ENCODE measurements at regions of chr15 and their contacts with region 1.

Region 1: DNA sequence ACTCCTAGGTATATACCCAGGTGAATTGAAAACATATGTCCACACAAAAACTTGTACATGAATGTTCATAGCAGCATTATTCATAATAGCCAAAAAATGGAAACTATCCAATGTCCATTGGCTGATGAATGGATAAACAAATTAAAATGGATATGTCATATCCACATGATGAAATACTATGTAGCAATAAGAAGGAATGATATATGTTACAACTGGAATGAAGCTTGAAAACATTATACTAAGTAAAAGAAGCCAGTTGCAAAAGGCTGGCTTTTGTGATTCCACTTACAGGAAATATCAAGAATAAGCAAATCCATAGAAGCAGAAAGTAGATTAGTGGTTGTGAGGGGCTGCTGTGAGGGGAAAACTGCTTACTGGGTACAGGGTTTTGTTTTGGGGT is 33.7 kb downstream of the BNC1 start:
- DNase-seq: no peak

Region 2: GRCh38 chr15:83559310-83559966 is 308.6 kb after region 1 on chr15:
- in situ Hi-C with region 1: loop called (anchors 25 kb)
- DNase-seq: peak; percentile 84